ENCODE measurements at regions of chr9 and their contacts with region 1.

Region 1: GRCh38 chr9:95010431-95010838 is 283.9 kb downstream of the AOPEP start:
- DNase-seq: no peak
- ATAC-seq: no peak
- H3K4me3 ChIP-seq: peak overlapping the region in 4 of 12 donors; percentile 13 to 86 (median 84)
- H3K27ac ChIP-seq: peak overlapping the region; percentile 7 to 100 (median 99)
- H3K4me1 ChIP-seq: peaks cover 0 to 80% (median 35%) of the 10 kb centered on the region in 12 donors
- H3K27me3 ChIP-seq: no peaks in the 10 kb centered on the region
- CTCF ChIP-seq: no peak
- POLR2A ChIP-seq: no peak

Region 2: DNA sequence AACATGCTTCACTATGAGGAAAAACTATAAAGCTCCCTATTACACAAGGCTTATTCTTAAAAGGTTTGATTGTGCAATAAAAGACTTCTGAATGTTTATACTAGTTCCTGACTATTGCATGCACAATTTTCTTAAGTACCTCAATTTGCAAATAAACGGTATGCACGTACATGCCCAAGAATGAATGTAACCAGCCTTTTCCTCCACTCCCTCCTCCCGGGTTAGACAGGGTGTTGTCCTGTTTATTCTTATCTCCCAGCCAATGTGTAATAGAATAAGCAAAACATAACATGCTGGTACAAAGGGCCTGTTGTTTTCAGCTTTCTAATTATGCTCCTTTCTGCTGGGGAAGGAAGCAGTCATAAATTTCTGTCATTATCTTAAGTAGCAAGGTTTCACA is 204.8 kb before region 1 on chr9:
- intact Hi-C with region 1: loop called in 1 of 10 experiments (anchors 5 kb)
- DNase-seq: no peak
- ATAC-seq: peak in 2 of 4 donors; percentile 57 to 59
- H3K4me3 ChIP-seq: no peak overlapping the region
- H3K27ac ChIP-seq: peak overlapping the region in 9 of 12 donors; percentile 7 to 57 (median 16)
- H3K4me1 ChIP-seq: peaks cover 0 to 61% (median 46%) of the 10 kb centered on the region in 12 donors
- H3K27me3 ChIP-seq: no peaks in the 10 kb centered on the region
- CTCF ChIP-seq: no peak
- POLR2A ChIP-seq: no peak

Region 3: DNA sequence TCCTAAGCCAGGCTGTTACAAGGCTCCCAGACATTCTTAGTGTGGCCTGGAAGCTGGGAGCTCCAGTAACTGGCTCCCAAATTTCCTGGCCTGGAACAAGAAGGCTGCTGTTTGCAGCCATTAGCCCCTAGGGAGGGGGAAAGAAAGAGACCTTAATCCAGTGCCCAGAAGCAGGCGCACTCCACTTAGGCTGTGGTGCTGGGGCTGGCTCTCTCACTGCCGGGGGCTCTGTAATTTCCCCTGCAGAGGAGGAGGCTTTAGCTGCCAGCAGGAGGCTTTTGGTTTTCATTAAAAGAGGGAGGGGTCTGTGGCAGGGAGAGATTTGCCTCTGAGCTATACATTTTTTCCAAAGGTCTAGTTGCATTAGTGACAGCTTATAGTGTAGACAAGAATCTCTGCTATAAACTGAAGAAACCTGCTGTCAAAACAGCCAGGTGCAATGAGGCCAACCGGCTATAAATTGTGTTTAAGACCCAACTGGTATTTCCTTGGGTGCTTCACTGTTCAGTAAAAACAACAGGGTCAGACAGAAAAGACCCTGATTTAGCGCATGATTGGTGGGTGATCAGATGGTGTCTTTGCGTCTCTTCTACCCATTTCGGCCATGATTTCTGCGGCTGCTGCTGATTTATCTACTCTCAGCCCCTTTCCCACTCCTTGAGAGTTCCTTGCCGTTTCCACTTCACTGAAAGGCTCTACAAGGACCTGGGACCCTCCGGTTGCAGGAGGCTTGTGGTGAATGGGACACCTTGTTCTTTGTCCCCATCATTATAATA is 29.3 kb before region 1 on chr9:
- intact Hi-C with region 1: no loop called
- DNase-seq: no peak
- ATAC-seq: no peak
- H3K4me3 ChIP-seq: no peak overlapping the region
- H3K27ac ChIP-seq: no peak overlapping the region
- H3K4me1 ChIP-seq: peaks cover 0 to 7% (median 0%) of the 10 kb centered on the region in 12 donors
- H3K27me3 ChIP-seq: no peaks in the 10 kb centered on the region
- CTCF ChIP-seq: no peak
- POLR2A ChIP-seq: no peak

Region 4: GRCh38 chr9:95031711-95032461 is 21.5 kb after region 1 on chr9:
- intact Hi-C with region 1: no loop called
- DNase-seq: no peak
- ATAC-seq: peak in 2 of 4 donors; percentile 3 to 23
- H3K4me3 ChIP-seq: peak overlapping the region in 2 of 12 donors; percentile 8 to 13
- H3K27ac ChIP-seq: peak overlapping the region in 11 of 12 donors; percentile 15 to 99 (median 62)
- H3K4me1 ChIP-seq: peaks cover 2 to 99% (median 81%) of the 10 kb centered on the region in 12 donors
- H3K27me3 ChIP-seq: no peaks in the 10 kb centered on the region
- CTCF ChIP-seq: no peak
- POLR2A ChIP-seq: no peak

Region 5: DNA sequence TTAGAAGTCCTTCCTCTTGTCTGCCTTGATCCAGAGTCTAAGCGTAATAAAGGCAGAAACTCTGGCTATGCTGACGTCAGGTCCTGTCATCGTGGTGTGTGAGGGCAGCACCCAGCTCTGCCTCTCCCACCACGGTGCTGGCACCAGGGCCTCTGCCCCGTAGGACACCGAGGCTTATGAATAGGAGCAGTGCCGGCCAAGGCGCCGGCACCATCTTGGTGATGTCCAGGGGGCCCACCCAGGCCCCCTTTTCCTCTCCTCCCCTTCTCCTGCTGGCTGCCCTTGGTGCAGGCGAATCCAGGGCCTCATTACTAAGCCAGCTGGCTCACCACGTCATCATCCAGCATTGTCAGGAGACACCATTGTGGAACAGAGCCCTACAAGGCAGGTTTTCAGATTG is 54.8 kb after region 1 on chr9:
- intact Hi-C with region 1: no loop called
- DNase-seq: peak in 1 of 5 donors; percentile 67
- ATAC-seq: peak; percentile 23 to 83 (median 63)
- H3K4me3 ChIP-seq: no peak overlapping the region
- H3K27ac ChIP-seq: peak overlapping the region in 10 of 12 donors; percentile 35 to 82 (median 65)
- H3K4me1 ChIP-seq: peaks cover 7 to 100% (median 88%) of the 10 kb centered on the region in 12 donors
- H3K27me3 ChIP-seq: no peaks in the 10 kb centered on the region
- CTCF ChIP-seq: no peak
- POLR2A ChIP-seq: no peak

Region 6: GRCh38 chr9:95623640-95624039 is 613.2 kb after region 1 on chr9:
- intact Hi-C with region 1: no loop called
- DNase-seq: no peak
- ATAC-seq: no peak
- H3K4me3 ChIP-seq: no peak overlapping the region
- H3K27ac ChIP-seq: no peak overlapping the region
- H3K4me1 ChIP-seq: peaks cover 0 to 12% (median 0%) of the 10 kb centered on the region in 12 donors
- H3K27me3 ChIP-seq: no peaks in the 10 kb centered on the region
- CTCF ChIP-seq: no peak
- POLR2A ChIP-seq: no peak